ENCODE measurements at regions of chr1 and their contacts with region 1.

Region 1: DNA sequence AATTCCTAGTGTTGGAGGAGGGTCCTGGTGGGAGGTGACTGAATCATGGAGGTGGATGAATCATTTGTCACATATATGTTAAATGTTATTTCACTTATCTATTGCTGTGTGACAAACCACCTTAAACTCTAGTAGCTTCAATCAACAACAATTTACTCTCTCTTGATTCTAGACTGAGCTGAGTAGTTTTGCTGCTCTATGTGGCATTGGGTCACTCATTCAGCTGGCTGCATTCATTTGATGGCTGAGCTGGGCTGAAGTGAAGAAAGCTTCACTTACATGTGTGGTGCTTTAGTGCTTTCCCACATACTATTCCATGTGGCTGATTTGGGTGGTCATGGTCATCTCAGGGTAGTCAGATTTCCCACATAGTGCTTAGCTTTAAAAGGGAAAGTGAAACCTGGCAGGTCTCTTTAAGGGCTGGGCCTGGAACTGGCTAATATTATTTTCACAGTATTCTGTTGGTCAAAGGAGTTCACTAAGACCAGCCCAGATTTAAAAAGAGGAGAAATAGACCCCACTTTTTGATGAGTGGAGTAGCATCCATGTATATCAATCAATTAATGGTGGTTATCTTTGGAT is 10.5 kb downstream of the DNAH14 start:
- DNase-seq: no peak
- H3K4me3 ChIP-seq: no peak overlapping the region
- H3K27ac ChIP-seq: no peak overlapping the region
- H3K4me1 ChIP-seq: no peaks in the 10 kb centered on the region
- H3K27me3 ChIP-seq: no peaks in the 10 kb centered on the region
- CTCF ChIP-seq: no peak

Region 2: DNA sequence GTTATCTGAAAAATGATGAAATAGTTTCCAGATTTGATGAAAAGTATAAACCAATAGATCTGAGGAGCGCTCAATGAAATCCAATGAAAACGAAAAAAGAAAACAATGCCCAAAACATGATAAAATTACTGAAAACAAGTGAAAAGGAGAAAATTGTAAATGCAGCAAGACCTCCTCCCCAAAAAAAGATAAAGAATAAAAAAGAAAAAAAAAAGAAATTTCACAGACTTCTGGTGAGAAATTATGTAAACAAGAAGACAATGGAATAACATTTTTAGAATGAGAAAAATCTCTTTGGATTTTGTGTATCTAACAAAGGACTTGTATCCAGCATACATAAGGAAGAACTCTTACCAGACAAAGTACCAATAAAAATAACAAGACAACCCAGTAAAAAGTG is 123.8 kb after region 1 on chr1:
- intact Hi-C with region 1: loop called (anchors 5 kb)
- DNase-seq: no peak
- H3K4me3 ChIP-seq: no peak overlapping the region
- H3K27ac ChIP-seq: no peak overlapping the region
- H3K4me1 ChIP-seq: no peaks in the 10 kb centered on the region
- H3K27me3 ChIP-seq: no peaks in the 10 kb centered on the region
- CTCF ChIP-seq: no peak

Region 3: DNA sequence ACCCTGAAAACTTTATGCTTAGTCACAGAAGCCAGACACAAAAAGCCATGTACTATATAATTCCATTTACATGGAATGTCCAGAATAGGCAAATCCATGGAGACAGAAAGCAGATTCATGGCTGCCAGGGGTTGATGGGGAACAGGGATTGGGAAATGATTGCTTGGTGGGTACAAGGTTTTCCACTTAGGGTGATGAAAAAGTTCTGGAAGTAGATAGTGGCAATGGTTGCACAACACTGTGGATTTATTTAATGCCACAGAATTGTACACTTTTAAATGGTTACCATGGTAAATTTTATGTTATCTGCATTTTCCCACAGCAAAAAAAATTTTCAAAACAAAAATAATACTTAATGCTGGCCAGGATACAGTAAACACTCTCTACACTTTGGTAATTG is 672.4 kb after region 1 on chr1:
- intact Hi-C with region 1: no loop called
- DNase-seq: no peak
- H3K4me3 ChIP-seq: no peak overlapping the region
- H3K27ac ChIP-seq: peak overlapping the region; percentile 57 to 60
- H3K4me1 ChIP-seq: peaks cover 0 to 75% (median 16%) of the 10 kb centered on the region in 4 donors
- H3K27me3 ChIP-seq: no peaks in the 10 kb centered on the region
- CTCF ChIP-seq: no peak